Mammary epithelial cell (primary cell): ENCODE measurements at regions of chr4 and their contacts with region 1.

Region 1: DNA sequence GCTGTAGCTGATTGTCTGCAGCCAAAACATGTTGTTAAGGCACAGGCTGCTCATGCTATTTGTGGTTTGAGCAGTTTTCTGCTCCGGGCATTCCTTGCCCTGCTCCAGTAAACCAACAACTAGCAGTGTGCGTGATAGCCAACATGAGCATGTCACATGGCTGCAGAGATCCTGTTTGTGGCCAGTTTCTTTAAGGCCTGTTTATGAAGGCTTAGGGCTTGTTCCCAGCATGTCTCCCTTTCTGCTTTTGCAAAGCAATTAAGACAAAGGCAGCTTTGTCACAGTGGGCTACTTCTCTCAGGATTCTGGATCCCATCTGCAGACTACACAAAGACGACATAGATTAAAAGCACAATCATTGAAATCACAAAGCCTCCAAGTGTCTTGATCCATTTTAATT is 160.5 kb downstream of the ZNF518B start:
- DNase-seq: peak; percentile 71
- H3K4me3 ChIP-seq: no peak overlapping the region
- H3K27ac ChIP-seq: no peak overlapping the region
- H3K4me1 ChIP-seq: peaks cover 18% of the 10 kb centered on the region
- H3K27me3 ChIP-seq: no peaks in the 10 kb centered on the region
- CTCF ChIP-seq: no peak

Region 2: DNA sequence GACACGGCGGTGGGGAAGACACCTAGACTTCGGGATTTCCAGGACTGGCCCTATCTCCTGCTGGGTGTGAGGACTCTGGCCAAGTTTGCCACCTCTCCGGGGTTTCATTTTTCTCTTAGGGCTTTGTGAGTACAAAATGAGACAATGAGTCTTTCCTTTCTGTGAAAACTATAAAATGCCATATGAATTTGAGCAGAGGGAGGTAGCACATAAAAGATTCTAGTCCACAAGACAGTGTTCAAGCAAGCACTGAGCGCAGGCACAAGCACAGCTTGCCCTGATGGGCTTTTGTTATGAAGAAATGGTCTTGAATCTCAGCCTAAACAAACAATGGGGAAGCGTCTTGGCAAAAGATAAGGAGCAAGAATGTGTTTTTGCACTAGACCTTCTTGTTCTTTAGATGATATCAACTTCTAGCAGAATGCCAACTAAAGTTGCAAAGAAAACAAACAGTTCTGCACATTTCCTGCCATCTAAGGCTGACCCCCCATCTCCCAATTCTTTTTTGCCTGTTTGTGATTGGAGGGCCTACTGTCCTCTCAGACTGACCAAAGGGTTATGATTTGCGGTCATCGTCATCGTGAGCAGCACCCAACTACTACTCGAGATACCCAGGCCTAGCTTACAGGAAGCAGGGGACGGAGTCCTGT is 233.5 kb after region 1 on chr4:
- CTCF ChIA-PET with region 1: no interaction called
- dilution Hi-C with region 1: no loop called
- in situ Hi-C with region 1: loop called in 1 of 2 experiments (anchors 25 kb)
- intact Hi-C with region 1: no loop called
- DNase-seq: peak; percentile 10
- H3K4me3 ChIP-seq: no peak overlapping the region
- H3K27ac ChIP-seq: no peak overlapping the region
- H3K4me1 ChIP-seq: peaks cover 34% of the 10 kb centered on the region
- H3K27me3 ChIP-seq: no peaks in the 10 kb centered on the region
- CTCF ChIP-seq: no peak